Activated T-helper 2 cell treated with anti-CD3 and anti-CD28 coated beads, Interferon-gamma antibody, Interleukin-2, Interleukin-4, amounts not matched to agents 10 μg/mL and 5 μg/mL and 100 μg/mL, durations not matched to agents 14 hours and 24 hours and 36 hours (primary cell): ENCODE measurements at regions of chr22 and their contacts with region 1.

Region 1: GRCh38 chr22:25060522-25061071 is 108.1 kb downstream of the KIAA1671 start:
- DNase-seq: peak; percentile 20
- H3K4me3 Mint-ChIP-seq: peak overlapping the region; percentile 50
- H3K27ac Mint-ChIP-seq: peak overlapping the region; percentile 87
- H3K4me1 Mint-ChIP-seq: peaks cover 44% of the 10 kb centered on the region
- H3K27me3 Mint-ChIP-seq: no peaks in the 10 kb centered on the region

Region 2: GRCh38 chr22:25048659-25049647 is 11.6 kb before region 1 on chr22:
- intact Hi-C with region 1: no loop called
- DNase-seq: peak; percentile 62
- H3K4me3 Mint-ChIP-seq: no peak overlapping the region
- H3K27ac Mint-ChIP-seq: no peak overlapping the region
- H3K4me1 Mint-ChIP-seq: peaks cover 9% of the 10 kb centered on the region
- H3K27me3 Mint-ChIP-seq: peaks cover 5% of the 10 kb centered on the region

Region 3: GRCh38 chr22:25076336-25076735 is 15.7 kb after region 1 on chr22:
- intact Hi-C with region 1: loop called (anchors 1 kb)
- DNase-seq: no peak
- H3K4me3 Mint-ChIP-seq: peak overlapping the region; percentile 46
- H3K27ac Mint-ChIP-seq: peak overlapping the region; percentile 81
- H3K4me1 Mint-ChIP-seq: peaks cover 72% of the 10 kb centered on the region
- H3K27me3 Mint-ChIP-seq: no peaks in the 10 kb centered on the region

Region 4: GRCh38 chr22:25081409-25081824 is 20.8 kb after region 1 on chr22:
- intact Hi-C with region 1: loop called (anchors 1 kb)
- DNase-seq: peak; percentile 32
- H3K4me3 Mint-ChIP-seq: no peak overlapping the region
- H3K27ac Mint-ChIP-seq: peak overlapping the region; percentile 62
- H3K4me1 Mint-ChIP-seq: peaks cover 67% of the 10 kb centered on the region
- H3K27me3 Mint-ChIP-seq: no peaks in the 10 kb centered on the region

Region 5: DNA sequence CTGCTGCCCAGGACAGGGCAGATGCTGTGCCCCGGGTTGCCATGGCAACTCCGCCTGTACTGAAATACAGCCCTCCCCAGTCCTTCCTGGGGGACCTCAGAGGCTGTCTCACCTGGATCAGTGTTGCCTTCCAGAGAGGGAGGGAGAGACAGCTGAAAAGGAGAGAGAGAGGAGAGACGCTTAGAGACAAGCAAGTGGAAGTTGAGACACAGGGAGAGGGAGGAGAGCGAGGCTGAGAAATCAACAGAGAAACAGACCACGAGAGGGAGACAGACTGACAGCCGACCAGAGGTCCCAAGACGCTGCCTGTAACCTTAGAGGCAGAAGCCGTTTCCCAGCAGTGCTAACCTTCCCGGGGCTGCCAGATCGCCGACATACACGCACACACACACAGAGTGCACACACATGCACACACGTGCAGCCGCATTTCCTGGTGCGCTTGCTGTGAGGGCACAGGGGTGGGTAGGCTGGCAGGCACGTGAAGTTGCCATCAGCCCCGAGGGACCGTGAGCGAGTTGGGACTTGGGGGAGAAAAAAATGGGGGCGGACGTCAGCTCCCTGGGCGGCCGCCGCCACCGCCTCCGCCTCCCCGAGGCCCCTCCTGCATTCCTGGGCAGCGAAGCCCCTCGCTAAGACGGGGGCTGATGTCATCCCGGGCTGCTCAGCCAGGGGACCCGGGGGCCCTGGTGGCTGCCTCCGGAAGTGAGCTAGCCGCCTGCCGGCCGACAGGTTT is 50.4 kb after region 1 on chr22:
- intact Hi-C with region 1: loop called (anchors 2 kb)
- DNase-seq: peak; percentile 22
- H3K4me3 Mint-ChIP-seq: peak overlapping the region; percentile 67
- H3K27ac Mint-ChIP-seq: peak overlapping the region; percentile 33
- H3K4me1 Mint-ChIP-seq: peaks cover 16% of the 10 kb centered on the region
- H3K27me3 Mint-ChIP-seq: no peaks in the 10 kb centered on the region